Head of caudate nucleus (tissue), 42 donors: ENCODE measurements at regions of chr1 and their contacts with region 1.

Region 1: DNA sequence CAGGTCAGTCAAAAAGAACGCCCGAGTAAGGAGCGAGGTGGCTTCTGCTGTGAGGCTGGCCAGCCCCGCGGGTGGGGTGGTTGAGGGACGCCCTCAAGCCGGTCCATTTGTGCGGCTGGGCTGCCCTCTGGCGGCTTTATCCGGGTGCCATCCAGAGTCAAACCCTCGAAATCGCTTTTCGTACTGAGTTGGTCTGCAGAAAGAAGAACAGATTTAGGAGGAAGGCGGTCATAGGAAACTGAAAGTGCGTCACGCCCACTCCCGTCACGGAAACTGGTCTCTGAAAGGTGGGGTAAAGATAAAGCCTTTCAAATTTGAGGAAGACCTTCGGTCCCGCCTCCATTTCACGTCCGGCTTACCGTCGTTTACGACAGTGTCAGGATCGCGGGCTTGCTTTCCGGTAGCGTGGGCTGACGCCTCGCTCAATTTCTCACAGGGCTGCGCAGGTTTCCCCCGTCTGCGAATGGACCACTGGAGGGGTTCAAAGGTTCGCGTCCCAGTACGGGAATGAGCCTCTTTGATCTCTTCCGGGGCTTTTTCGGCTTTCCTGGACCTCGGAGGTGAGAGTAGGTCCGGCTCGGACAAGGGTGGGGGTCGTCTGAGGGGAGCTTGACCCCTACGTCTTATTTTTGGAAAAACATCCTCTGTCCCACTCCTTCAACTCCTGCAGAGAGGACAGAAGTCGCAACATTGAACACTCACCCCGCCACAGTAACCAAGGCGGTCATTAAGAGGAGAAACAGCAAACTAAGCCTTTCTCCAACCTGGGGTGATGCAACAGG is at the start of gene HAX1:
- DNase-seq: peak; percentile 83 to 96 (median 91)

Region 2: GRCh38 chr1:154220071-154220969 is 52.1 kb before region 1 on chr1 and contains the start of gene UBAP2L:
- intact Hi-C with region 1: loop called (anchors 2 kb)
- DNase-seq: peak; percentile 96 to 99 (median 98)

Region 3: DNA sequence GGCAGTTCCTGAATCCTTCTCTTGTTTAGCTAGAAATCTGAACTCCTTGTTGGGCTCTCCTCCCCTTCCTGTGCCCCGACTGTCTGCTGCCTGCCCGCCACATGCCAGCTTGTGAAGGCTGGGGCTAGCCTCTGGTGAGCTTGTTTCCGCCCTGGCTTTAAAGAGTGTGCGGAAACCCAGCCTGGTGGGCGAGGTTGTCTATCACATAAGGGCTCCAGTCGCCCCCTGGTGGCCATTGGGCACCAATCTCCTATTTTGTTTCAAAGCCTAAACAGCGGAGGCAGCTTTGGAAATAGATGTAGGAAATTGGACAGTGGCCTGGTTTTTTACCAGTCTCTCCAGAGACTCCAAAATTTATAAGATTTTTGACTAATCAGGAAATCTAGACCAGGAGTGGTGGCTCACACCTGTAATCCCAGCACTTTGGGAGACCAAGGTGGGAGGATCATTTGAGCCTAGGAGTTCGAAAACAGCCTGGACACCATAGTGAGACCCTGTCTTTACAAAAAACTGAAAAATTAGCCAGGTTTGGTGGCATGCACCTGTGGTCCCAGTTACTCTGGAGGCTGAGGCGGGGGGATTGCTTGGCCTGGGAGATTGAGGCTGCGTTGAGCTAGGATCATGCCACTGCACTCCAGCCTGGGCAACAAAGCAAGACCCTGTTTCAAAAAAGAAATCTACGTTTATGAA is 62.8 kb after region 1 on chr1:
- intact Hi-C with region 1: loop called (anchors 5 kb)
- DNase-seq: peak; percentile 69 to 92 (median 83)

Region 4: DNA sequence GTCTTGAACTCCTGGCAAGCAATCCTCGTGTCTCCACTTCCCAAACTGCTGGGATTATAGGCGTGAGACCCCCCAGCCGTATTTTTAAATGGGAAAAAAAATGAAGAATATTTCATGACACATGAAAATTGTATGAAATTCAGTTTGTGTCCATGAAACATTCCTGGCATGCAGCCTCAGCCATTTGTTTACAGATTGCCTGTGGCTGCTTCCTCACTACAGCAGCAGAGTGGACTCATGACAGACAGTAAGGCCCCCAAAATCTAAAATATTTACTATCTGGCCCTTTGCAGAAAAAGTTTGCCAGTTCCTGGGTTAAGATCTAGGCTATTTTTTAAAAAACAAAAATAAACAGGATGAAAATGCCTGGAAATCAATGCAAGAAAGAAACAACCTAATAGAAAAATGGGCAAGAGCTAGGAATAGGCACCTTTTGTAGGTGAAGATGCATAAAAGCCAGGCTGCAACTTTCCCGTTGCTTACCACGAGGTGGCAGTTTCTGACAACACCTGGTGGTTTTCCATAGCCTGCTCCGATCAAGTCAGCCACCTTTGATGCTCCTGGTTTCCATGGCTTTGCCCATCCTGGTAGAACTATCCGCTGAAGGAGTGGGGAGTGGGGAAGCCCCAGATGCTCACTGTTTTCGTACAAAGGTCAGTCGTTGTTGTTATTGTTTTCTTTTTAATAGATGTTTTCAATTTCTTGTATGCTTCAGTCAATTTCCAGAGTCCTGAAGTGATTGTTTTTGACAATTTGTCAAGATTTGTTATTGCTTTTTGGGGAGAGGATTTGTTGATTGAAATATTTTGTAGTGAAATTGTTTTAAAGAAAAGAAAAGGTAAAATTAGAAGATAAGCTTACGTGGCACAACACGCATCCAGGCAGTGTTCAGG is 261.8 kb after region 1 on chr1:
- intact Hi-C with region 1: no loop called
- DNase-seq: peak in 2 of 42 donors; percentile 24 to 47